Activated CD4-positive, alpha-beta T cell treated with anti-CD3 and anti-CD28 coated beads for 36 hours (primary cell): ENCODE measurements at regions of chr17 and their contacts with region 1.

Region 1: GRCh38 chr17:72556944-72557826 is 436.4 kb downstream of the SOX9 start:
- DNase-seq: peak; percentile 80
- ATAC-seq: peak; percentile 79
- H3K4me3 Mint-ChIP-seq: no peak overlapping the region
- H3K27ac Mint-ChIP-seq: no peak overlapping the region
- H3K4me1 Mint-ChIP-seq: no peaks in the 10 kb centered on the region
- H3K27me3 Mint-ChIP-seq: peaks cover 2% of the 10 kb centered on the region

Region 2: DNA sequence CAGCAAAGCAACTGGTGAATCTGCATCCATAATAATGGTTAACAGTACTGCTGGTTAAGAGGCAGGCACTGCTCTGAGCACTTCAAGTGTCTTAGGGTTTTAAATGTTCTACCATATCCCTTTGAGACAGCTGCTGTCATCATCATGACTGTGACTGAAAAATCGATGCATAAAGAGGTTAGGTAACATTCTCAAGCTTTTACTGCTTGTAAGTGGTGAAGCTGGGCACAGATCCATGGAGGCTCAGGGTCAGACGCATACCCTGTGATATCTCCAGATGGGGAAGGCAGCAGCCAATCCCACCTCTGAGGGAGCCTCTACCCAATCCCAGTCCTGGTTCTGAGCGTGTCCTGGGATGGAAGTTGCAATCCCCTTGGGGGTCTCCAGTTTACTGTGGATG is 493.9 kb before region 1 on chr17:
- CTCF ChIA-PET with region 1: no interaction called
- POLR2A ChIA-PET with region 1: no interaction called
- intact Hi-C with region 1: no loop called
- DNase-seq: no peak
- ATAC-seq: no peak
- H3K4me3 Mint-ChIP-seq: no peak overlapping the region
- H3K27ac Mint-ChIP-seq: no peak overlapping the region
- H3K4me1 Mint-ChIP-seq: no peaks in the 10 kb centered on the region
- H3K27me3 Mint-ChIP-seq: no peaks in the 10 kb centered on the region

Region 3: DNA sequence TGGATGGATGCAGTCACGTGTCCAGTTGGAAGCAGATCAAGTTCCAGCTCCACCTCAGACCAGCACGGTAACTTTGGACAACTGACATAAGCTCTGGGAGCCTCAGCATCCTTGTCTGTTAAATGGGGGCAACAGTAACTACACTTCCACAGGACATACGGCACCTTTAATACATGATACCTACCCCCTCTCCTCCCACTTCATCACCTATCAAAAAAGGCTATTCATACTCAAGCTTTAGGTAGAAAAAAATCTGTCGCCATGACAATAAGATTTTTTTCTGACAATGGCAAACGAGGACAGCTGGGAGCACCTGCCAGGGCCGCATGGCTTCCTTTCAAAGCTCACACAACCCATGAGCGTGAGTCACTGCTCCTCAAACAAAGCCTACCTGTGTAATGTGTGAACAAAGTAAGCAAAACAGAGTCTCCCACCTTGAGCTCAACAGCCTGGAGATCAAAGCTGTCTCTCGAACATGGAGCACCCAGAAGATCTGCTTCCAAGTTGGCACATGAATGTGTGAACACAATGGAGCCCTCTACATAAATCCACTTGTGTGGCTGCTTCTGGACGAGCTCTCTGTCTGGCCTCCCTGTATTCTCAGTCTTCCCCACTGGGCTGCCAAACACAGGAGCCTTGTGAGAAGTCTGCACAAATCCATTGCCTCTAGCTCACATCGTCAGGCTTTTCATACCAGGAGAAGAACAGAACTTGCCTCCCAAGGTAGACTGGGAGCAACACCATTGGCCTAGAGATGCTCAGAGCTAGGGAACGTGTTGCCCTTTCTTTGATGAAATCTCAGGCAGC is 23.3 kb after region 1 on chr17:
- CTCF ChIA-PET with region 1: interaction called, 10 read pairs
- POLR2A ChIA-PET with region 1: no interaction called
- intact Hi-C with region 1: no loop called
- DNase-seq: no peak
- ATAC-seq: no peak
- H3K4me3 Mint-ChIP-seq: no peak overlapping the region
- H3K27ac Mint-ChIP-seq: no peak overlapping the region
- H3K4me1 Mint-ChIP-seq: no peaks in the 10 kb centered on the region
- H3K27me3 Mint-ChIP-seq: no peaks in the 10 kb centered on the region

Region 4: DNA sequence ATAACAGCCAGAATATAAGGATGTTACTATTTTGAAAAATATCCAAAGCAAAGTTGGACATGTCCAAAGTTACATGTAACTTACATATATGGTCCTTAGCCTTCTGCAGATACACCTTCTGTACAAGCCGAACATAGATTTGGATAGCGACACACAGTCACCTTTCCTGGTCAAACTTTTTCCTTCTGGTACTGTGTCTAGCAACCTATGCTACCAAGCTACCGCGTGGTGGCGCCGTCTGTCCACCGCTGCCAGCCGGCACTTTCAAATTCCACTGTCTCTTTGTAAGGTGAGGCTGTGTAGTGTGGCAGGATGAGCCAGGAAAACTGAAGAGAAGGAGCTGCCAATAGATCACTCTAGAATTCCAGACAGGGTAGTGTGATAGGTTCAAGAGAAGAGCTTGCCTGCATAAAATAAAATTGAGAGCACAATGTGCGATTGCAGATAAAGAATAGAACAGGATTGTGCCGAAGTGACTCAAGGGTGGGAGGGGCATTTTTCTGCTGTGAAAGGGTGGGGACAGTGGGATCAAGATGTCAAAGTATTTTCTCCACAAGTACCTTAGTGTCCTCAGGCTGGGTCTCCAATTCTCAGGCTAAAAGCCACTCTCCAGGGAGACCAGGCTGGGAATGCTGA is 168.4 kb after region 1 on chr17:
- CTCF ChIA-PET with region 1: interaction called, 71 read pairs
- POLR2A ChIA-PET with region 1: no interaction called
- intact Hi-C with region 1: loop called (anchors 1 to 5 kb)
- DNase-seq: peak; percentile 75
- ATAC-seq: peak; percentile 50
- H3K4me3 Mint-ChIP-seq: no peak overlapping the region
- H3K27ac Mint-ChIP-seq: peak overlapping the region; percentile 76
- H3K4me1 Mint-ChIP-seq: peaks cover 36% of the 10 kb centered on the region
- H3K27me3 Mint-ChIP-seq: no peaks in the 10 kb centered on the region

Region 5: DNA sequence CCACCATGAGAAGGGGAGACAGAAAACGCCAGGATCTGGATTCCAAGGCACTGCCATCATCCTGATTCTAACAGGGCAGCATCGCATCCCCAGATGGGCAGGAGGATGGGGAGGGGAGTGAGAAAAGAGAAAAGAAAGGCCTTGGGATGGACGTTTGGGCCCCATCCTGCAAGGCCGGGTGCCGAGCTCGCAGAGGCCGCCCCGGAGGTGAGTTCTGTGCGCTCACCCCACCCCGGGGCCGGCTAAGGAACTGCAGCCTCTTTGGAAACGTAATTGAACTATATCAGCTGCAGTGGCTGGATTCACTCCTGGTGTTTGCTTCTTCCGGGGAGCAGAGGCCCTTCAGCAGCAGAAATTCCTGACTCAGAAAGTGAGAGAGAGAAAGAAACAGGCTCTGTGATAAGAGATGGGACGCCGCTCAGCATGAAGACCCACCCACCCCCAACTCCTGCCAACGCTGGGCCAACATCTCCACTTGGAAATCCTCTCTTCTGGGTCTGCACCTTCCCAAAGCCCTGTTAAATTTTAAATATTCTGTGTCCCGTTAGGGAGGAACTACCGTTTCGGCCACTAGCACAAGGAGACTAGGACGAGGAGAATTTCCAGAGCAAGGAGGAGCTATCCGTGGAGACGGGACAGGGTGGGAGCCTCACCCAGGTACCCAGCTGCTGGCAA is 599.1 kb after region 1 on chr17:
- CTCF ChIA-PET with region 1: interaction called, 4 read pairs
- POLR2A ChIA-PET with region 1: no interaction called
- intact Hi-C with region 1: loop called (anchors 1 to 5 kb)
- DNase-seq: peak; percentile 81
- ATAC-seq: peak; percentile 87
- H3K4me3 Mint-ChIP-seq: no peak overlapping the region
- H3K27ac Mint-ChIP-seq: no peak overlapping the region
- H3K4me1 Mint-ChIP-seq: peaks cover 14% of the 10 kb centered on the region
- H3K27me3 Mint-ChIP-seq: peaks cover 17% of the 10 kb centered on the region

Region 6: GRCh38 chr17:73255671-73256181 is 698.5 kb after region 1 on chr17:
- CTCF ChIA-PET with region 1: no interaction called
- POLR2A ChIA-PET with region 1: no interaction called
- intact Hi-C with region 1: loop called in 1 of 2 experiments (anchors 1 kb)
- DNase-seq: peak; percentile 75
- ATAC-seq: peak; percentile 92
- H3K4me3 Mint-ChIP-seq: no peak overlapping the region
- H3K27ac Mint-ChIP-seq: no peak overlapping the region
- H3K4me1 Mint-ChIP-seq: no peaks in the 10 kb centered on the region
- H3K27me3 Mint-ChIP-seq: no peaks in the 10 kb centered on the region

Region 7: GRCh38 chr17:73371285-73371684 is 814.1 kb after region 1 on chr17:
- CTCF ChIA-PET with region 1: interaction called, 8 read pairs
- POLR2A ChIA-PET with region 1: no interaction called
- intact Hi-C with region 1: loop called (anchors 1 to 10 kb)
- DNase-seq: no peak
- ATAC-seq: no peak
- H3K4me3 Mint-ChIP-seq: no peak overlapping the region
- H3K27ac Mint-ChIP-seq: no peak overlapping the region
- H3K4me1 Mint-ChIP-seq: no peaks in the 10 kb centered on the region
- H3K27me3 Mint-ChIP-seq: no peaks in the 10 kb centered on the region